Breast epithelium (tissue), 4 donors: ENCODE measurements at regions of chr7 and their contacts with region 1.

Region 1: DNA sequence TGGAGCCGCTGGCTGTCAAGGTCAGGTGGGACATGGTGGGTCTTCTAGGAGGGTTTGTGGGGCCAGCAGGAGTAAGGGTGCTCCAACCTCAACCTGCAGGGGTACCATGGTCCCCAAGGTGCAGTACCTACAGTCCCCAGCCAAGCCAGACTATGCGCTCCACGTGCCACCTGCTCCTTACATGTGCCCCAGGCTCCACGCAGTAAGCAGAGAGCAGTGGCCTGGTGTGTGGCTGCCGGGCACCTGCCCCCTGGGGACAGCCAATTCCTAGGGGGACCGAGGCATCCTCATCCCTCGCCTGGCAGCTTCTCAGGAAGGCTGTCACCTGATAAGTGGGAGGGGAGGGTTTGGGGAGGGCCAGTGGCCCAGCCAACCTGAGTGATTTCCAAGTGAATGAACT is 11.7 kb upstream of the ZNF716 start:
- DNase-seq: no peak
- H3K4me3 ChIP-seq: no peak overlapping the region
- H3K27ac ChIP-seq: no peak overlapping the region
- H3K4me1 ChIP-seq: no peaks in the 10 kb centered on the region
- H3K27me3 ChIP-seq: no peaks in the 10 kb centered on the region
- CTCF ChIP-seq: no peak
- POLR2A ChIP-seq: no peak

Region 2: DNA sequence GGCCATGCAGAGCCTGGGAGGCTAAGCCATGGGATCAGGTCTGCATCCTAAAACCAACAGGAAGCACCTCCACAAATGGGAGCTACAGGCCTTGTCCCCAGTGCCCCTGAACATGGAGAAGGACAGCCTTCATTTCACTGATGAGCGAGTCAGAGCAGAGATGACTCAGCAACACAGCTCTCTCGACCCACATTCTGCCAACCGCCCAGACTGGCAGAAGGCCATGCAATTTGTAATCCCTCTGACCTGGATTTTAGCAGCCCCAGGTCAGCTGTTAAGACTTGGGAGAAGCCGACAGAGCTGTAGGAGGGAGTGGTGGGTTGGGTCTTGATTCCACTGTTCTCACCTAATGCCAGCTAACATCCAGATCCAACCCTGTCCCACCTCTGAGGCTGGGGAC is 1891.4 kb before region 1 on chr7:
- intact Hi-C with region 1: no loop called
- DNase-seq: peak; percentile 54 to 74
- H3K4me3 ChIP-seq: no peak overlapping the region
- H3K27ac ChIP-seq: peak overlapping the region in 1 of 2 donors; percentile 50
- H3K4me1 ChIP-seq: no peaks in the 10 kb centered on the region
- H3K27me3 ChIP-seq: no peaks in the 10 kb centered on the region
- CTCF ChIP-seq: no peak
- POLR2A ChIP-seq: no peak

Region 3: DNA sequence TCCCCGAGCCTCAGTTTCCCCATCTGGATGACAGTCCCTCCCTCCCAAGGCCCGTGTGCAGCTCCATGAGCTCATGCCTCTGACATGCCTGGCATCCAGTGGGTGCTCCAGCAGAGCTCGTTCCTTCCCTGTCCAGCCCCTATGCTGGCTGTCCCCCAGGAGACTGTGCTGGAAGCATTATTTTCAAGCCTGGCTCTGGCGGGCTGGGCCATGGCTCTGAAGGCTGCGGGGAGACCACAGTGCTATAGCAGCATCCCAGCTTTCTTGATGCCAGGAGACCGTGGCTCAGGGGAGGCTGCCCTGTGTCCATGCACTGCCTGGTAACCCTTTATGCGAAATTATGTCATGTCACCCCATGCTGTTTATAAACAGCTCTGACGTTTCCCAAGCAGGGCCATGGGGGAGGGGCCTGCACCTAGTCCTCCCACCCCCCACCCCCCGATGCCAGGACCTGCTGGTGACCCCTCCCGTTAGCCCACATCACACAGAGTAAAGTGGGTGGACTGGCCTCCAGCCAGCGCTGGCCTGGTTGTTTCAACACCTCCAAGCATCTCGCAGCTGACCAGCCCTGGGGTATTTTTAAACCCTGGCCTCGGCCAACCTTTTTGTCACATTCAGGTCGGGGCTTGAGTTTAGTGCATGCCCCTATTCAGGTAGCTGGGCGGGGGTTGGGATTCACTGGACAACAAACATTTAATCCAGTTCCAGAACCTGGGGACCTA is 94.2 kb before region 1 on chr7:
- intact Hi-C with region 1: no loop called
- DNase-seq: no peak
- H3K4me3 ChIP-seq: no peak overlapping the region
- H3K27ac ChIP-seq: no peak overlapping the region
- H3K4me1 ChIP-seq: no peaks in the 10 kb centered on the region
- H3K27me3 ChIP-seq: no peaks in the 10 kb centered on the region
- CTCF ChIP-seq: no peak
- POLR2A ChIP-seq: no peak

Region 4: DNA sequence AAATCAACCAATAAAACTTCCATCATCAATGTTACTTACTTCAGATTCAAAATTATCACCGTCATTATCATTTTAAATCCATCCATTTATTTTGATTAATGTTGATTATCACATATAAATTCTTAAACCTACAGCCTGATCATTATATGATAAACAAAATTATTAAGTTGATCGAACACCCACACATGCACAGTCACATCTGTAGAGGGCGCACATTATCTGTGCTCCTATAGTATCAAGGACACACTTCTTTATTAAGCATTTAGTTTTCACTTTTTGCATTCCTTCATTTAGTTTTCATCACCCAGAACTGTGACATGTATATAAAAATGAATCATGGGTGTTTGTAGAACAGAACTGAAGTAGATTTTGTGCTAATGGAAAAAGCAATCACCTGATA is 14.5 kb before region 1 on chr7:
- intact Hi-C with region 1: loop called (anchors 1 kb)
- DNase-seq: no peak
- H3K4me3 ChIP-seq: no peak overlapping the region
- H3K27ac ChIP-seq: no peak overlapping the region
- H3K4me1 ChIP-seq: no peaks in the 10 kb centered on the region
- H3K27me3 ChIP-seq: no peaks in the 10 kb centered on the region
- CTCF ChIP-seq: no peak
- POLR2A ChIP-seq: no peak